Right ventricle myocardium inferior (tissue), 1 donor: ENCODE measurements at regions of chr14 and their contacts with region 1.

Region 1: DNA sequence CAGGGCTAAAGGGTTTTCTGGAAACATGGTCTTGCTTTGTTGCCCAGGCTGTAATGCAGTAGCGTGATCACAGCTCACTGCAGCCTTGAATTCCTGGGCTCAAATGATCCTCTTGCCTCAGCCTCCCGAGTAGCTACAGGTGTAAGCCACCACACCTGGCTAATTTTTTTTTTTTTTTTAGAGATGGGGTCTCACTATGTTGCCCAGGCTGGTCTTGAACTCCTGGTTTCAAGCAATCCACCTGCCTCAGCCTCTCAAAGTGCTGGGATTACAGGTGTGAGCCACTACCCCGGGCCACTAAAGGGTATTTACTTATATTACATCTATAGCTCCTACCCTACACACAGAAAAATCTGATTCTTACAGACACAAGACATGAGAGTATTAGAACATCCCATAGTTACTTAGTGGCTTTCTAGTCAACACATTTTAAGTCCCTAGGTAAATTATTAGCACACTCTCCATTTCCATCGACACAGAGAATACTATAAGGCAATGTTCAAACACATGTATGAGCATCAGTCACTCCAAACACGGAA is 6.2 kb upstream of the DCAF11 start:
- DNase-seq: no peak
- ATAC-seq: no peak

Region 2: DNA sequence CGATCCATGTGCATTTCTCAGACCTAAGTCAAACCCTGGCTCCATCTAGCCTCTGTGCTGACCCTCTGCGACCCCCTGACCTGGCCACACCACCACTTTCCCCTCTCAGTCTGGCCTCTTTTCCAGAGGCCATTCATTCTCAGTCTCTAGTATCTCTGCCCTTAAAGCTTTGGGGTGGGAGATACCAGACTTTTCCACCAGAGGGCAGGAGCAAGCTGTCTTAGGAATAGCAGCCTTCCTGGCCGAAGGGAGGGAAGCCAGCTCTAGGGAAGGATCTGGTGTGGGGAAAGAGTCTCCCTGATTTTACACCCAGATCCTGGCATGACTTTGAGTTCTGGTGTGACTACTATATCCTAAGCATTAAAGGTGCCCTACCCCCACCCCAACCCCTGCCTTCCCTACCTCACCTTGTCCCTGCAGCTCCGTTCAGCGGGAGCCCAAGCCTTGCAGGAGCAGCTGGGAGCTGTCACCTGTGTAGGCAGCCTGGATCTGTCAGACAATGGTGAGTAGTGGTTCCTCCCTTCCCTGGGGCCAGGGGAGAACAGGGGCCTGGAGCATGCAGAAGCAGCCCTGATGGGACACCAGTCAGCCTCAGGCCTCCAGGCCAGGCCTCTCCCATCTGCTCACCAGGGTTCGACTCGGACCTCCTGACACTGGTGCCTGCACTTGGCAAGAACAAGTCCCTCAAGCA is 50.0 kb before region 1 on chr14:
- intact Hi-C with region 1: loop called (anchors 5 kb)
- DNase-seq: no peak
- ATAC-seq: peak; percentile 77